CD4-positive, alpha-beta memory T cell (primary cell): ENCODE measurements at regions of chr10 and their contacts with region 1.

Region 1: GRCh38 chr10:14009371-14010100 is 321.2 kb downstream of the FRMD4A start:
- DNase-seq: peak; percentile 71 to 89 (median 74)
- H3K4me3 ChIP-seq: peak overlapping the region; percentile 26 to 65
- H3K4me3 Mint-ChIP-seq: peak overlapping the region; percentile 81 to 87 (median 85)
- H3K27ac ChIP-seq: peak overlapping the region; percentile 60
- H3K27ac Mint-ChIP-seq: peak overlapping the region; percentile 73 to 96 (median 90)
- H3K4me1 ChIP-seq: peaks cover 31% of the 10 kb centered on the region
- H3K4me1 Mint-ChIP-seq: peaks cover 25 to 56% (median 41%) of the 10 kb centered on the region in 4 donors
- H3K27me3 ChIP-seq: no peaks in the 10 kb centered on the region
- H3K27me3 Mint-ChIP-seq: peaks cover 0 to 1% of the 10 kb centered on the region in 2 donors

Region 2: DNA sequence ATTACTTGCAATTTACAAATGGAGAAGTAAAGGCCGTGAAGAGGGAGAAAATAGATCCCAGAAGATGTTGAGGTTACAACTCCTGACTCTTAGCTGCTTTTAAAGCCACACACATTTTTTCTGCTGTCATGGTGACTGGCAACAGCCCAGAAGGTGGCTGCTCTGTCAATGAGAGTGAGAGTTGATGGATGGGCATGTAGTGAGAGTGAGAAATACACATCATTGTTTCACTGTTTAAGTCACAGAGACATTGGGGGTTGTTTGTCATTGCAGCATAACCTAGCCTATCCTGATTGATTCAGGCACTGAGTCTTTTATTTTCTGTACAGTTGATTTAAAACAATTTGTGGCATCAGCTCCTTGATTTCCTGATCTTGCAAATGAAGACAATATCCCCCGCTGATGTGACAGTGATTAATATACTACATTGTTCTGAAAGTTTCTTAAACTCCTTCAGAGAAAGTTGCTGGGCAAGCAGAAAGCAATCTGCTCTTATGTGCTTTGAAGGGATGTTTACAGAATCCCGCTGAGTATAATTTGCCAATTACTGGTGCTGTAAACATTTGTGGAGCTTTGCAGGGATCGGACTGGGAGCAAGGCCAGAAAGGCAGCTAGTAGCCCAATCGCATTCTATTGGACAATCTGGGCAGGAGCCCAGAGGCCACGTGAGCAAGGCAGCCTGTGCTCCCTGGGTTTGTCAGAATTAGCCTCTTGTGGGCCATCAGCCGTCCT is 193.2 kb before region 1 on chr10:
- CTCF ChIA-PET with region 1: no interaction called
- POLR2A ChIA-PET with region 1: no interaction called
- intact Hi-C with region 1: no loop called
- DNase-seq: no peak
- H3K4me3 ChIP-seq: no peak overlapping the region
- H3K4me3 Mint-ChIP-seq: no peak overlapping the region
- H3K27ac ChIP-seq: no peak overlapping the region
- H3K27ac Mint-ChIP-seq: no peak overlapping the region
- H3K4me1 ChIP-seq: peaks cover 15% of the 10 kb centered on the region
- H3K4me1 Mint-ChIP-seq: peaks cover 6 to 12% (median 9%) of the 10 kb centered on the region in 4 donors
- H3K27me3 ChIP-seq: no peaks in the 10 kb centered on the region
- H3K27me3 Mint-ChIP-seq: no peaks in the 10 kb centered on the region

Region 3: DNA sequence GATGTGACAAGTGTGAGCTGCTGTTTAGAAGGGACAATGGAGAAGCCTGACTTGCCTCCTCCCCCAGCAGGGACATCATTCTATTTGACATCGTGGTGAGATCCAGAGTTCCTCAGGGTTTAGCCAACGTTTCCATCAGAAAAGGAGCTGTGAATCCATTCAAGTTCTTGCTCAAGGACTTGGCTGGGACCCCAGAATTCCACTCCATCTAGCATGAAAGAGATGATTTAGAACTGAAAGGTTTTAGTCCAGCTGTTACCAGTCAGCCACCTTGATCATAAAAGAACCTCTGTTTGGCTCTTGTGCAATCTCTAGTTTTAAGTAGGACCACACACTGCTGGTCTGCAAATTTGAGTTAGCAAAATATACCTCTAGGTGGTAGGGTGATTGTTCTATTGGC is 16.4 kb before region 1 on chr10:
- CTCF ChIA-PET with region 1: no interaction called
- POLR2A ChIA-PET with region 1: interaction called, 11 read pairs
- intact Hi-C with region 1: no loop called
- DNase-seq: no peak
- H3K4me3 ChIP-seq: no peak overlapping the region
- H3K4me3 Mint-ChIP-seq: peak overlapping the region in 1 of 8 donors; percentile 60
- H3K27ac ChIP-seq: no peak overlapping the region
- H3K27ac Mint-ChIP-seq: peak overlapping the region in 3 of 7 donors; percentile 6 to 68 (median 17)
- H3K4me1 ChIP-seq: peaks cover 13% of the 10 kb centered on the region
- H3K4me1 Mint-ChIP-seq: peaks cover 9 to 20% (median 13%) of the 10 kb centered on the region in 4 donors
- H3K27me3 ChIP-seq: no peaks in the 10 kb centered on the region
- H3K27me3 Mint-ChIP-seq: no peaks in the 10 kb centered on the region

Region 4: DNA sequence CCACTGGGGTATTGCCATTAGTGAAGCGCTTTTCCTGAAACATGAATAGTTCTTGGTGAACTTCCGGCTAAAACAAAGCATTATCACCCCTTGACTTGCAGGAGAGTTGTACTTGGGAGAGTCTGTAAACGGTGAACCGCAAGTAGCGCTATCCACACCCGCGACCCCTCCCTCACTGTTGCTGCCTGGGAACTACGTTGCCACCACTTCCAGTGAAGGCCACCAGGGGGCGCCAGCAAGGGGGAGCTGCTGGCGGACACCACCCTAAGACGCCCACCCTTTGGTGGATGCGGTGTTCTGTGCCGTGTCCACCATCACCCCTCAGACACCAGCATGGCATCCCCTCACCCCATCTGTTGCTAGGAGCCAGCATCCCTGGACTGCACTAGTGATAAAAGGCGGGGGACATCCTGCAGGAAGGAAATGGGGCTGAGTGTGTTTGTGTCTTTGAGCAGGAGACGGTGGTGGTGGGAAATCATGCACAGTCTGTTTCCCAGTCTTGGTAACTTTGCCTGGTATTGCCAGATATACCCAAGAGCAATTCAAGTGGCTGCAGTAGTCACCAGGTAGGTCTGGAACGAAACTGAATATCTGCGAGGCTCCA is 23.0 kb after region 1 on chr10:
- CTCF ChIA-PET with region 1: interaction called, 3 read pairs
- POLR2A ChIA-PET with region 1: interaction called, 3 read pairs
- intact Hi-C with region 1: loop called (anchors 1 kb)
- DNase-seq: peak in 4 of 5 donors; percentile 19 to 44 (median 38)
- H3K4me3 ChIP-seq: no peak overlapping the region
- H3K4me3 Mint-ChIP-seq: peak overlapping the region in 2 of 8 donors; percentile 14 to 21
- H3K27ac ChIP-seq: no peak overlapping the region
- H3K27ac Mint-ChIP-seq: peak overlapping the region in 1 of 7 donors; percentile 50
- H3K4me1 ChIP-seq: no peaks in the 10 kb centered on the region
- H3K4me1 Mint-ChIP-seq: peaks cover 4 to 9% (median 7%) of the 10 kb centered on the region in 4 donors
- H3K27me3 ChIP-seq: no peaks in the 10 kb centered on the region
- H3K27me3 Mint-ChIP-seq: peaks cover 0 to 5% of the 10 kb centered on the region in 2 donors

Region 5: DNA sequence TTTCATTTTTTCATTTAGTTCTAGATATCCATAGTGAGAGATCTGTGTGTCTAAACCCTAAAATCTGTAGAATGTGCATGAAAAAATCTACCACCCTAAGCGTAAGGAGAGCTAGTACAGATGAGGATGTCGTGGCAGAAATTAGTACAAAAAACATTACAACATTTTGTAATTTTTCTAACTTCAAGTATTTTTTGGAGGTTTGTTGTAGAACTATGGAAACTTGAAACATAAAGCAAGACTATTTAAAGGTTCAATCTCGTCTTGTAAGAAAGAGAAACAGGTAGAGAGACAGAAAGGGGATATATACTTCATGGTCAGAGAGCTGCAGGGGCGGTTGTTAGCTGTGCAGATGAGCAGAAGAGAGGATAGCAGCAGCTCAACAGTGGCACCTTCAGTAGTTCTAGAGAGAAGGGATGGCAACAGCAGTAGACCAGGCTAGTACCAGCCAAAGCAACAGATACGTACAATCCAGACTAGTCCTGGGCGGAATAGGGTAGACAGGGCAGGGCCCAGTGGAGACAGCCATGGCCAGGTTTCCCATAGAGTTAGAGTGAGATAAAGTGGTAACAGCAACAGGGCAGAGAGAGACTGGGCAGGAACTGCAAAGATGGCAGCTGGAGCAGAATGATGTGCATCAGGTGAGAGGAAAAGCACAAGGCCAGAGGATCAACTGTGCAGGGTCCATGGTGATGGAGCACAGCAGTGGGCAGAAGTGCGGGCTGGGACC is 175.9 kb after region 1 on chr10:
- CTCF ChIA-PET with region 1: interaction called, 3 read pairs
- POLR2A ChIA-PET with region 1: interaction called, 3 read pairs
- intact Hi-C with region 1: loop called (anchors 2 kb)
- DNase-seq: peak in 3 of 5 donors; percentile 74 to 85 (median 80)
- H3K4me3 ChIP-seq: peak overlapping the region in 1 of 2 donors; percentile 7
- H3K4me3 Mint-ChIP-seq: peak overlapping the region; percentile 73 to 86 (median 80)
- H3K27ac ChIP-seq: peak overlapping the region; percentile 51
- H3K27ac Mint-ChIP-seq: peak overlapping the region; percentile 93 to 99 (median 98)
- H3K4me1 ChIP-seq: peaks cover 24% of the 10 kb centered on the region
- H3K4me1 Mint-ChIP-seq: peaks cover 21 to 28% (median 24%) of the 10 kb centered on the region in 4 donors
- H3K27me3 ChIP-seq: peaks cover 9% of the 10 kb centered on the region
- H3K27me3 Mint-ChIP-seq: peaks cover 19 to 23% of the 10 kb centered on the region in 2 donors